Caco-2 (cell line): ENCODE measurements at regions of chr4 and their contacts with region 1.

Region 1: DNA sequence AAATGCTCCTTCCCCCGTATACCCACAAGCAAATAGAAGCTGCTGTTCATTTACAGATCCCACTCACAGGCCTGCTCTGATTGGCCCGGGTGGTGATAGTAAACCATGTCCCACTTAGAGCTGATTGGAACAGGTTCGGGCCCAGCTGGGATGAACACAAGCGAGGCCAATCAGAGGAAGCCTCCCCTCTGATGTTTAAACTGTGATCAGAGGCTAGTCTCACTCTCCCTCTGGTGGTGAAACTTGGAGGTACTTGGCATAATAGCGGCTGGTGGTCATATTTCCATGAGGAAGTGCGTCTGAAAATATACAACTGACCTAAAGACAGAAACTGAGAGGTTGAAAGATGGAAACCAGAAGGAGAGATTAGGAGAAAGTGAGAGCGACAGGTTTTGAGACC is 51.5 kb upstream of the TRPC3 start:
- DNase-seq: peak; percentile 83 to 87
- H3K4me3 ChIP-seq: no peak overlapping the region
- H3K4me3 Mint-ChIP-seq: peak overlapping the region; percentile 64
- H3K27ac Mint-ChIP-seq: peak overlapping the region; percentile 42
- H3K4me1 ChIP-seq: peaks cover 7% of the 10 kb centered on the region
- H3K4me1 Mint-ChIP-seq: peaks cover 7% of the 10 kb centered on the region
- H3K27me3 ChIP-seq: no peaks in the 10 kb centered on the region
- H3K27me3 Mint-ChIP-seq: peaks cover 3% of the 10 kb centered on the region
- CTCF ChIP-seq: peak; percentile 55 to 59

Region 2: DNA sequence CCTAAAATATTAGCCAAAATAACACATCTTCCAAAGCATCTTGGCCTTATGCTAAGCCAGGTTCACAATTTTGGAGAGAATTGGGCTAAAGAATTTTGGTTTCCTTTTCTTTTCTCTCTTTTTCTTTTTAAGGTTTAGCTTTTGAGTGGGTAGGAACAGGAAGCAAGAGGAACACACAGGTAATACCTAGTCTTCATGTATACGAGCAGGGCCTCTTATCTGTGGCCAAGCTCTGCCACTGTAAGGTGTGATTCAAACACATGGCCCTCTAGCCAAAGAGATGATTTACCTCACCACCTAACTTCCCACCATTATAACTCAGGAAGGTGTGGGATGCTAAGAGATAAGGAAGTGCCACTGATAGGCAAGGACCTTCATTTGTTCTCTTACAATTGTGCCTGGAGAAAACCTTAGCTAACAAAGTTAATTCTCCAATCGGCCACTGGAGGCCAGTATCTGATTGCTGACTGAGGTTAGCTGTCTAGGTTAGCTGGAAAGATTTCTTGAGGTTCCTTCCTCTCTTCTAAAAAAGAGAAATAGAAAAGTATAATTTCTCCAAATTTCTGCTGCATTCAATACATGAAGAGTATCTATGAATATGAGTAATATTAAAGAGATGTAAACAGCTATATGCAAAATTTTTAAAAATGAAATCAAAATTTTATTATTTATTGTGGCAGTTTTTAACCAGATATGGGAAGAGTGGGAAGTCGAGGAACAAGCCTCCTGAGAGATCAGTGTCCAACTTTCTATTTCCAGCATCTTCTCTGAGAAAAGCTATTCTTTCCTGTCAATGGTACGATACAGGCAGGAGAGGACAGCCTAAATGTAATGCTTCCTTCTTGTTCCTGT is 103.0 kb before region 1 on chr4:
- CTCF ChIA-PET with region 1: interaction called, 37 read pairs
- POLR2A ChIA-PET with region 1: no interaction called
- intact Hi-C with region 1: loop called (anchors 1 kb)
- DNase-seq: peak; percentile 44 to 62
- H3K4me3 ChIP-seq: no peak overlapping the region
- H3K4me3 Mint-ChIP-seq: no peak overlapping the region
- H3K27ac Mint-ChIP-seq: no peak overlapping the region
- H3K4me1 ChIP-seq: no peaks in the 10 kb centered on the region
- H3K4me1 Mint-ChIP-seq: no peaks in the 10 kb centered on the region
- H3K27me3 ChIP-seq: no peaks in the 10 kb centered on the region
- H3K27me3 Mint-ChIP-seq: peaks cover 5% of the 10 kb centered on the region
- CTCF ChIP-seq: peak; percentile 73 to 74

Region 3: GRCh38 chr4:121957266-121957665 is 46.1 kb before region 1 on chr4:
- CTCF ChIA-PET with region 1: interaction called, 5 read pairs
- POLR2A ChIA-PET with region 1: interaction called, 3 read pairs
- intact Hi-C with region 1: loop called (anchors 1 kb)
- DNase-seq: peak; percentile 62 to 66
- H3K4me3 ChIP-seq: no peak overlapping the region
- H3K4me3 Mint-ChIP-seq: no peak overlapping the region
- H3K27ac Mint-ChIP-seq: no peak overlapping the region
- H3K4me1 ChIP-seq: peaks cover 22% of the 10 kb centered on the region
- H3K4me1 Mint-ChIP-seq: peaks cover 6% of the 10 kb centered on the region
- H3K27me3 ChIP-seq: no peaks in the 10 kb centered on the region
- H3K27me3 Mint-ChIP-seq: peaks cover 6% of the 10 kb centered on the region
- CTCF ChIP-seq: no peak